Dendritic cell treated with granulocyte-macrophage colony-stimulating factor and Interleukin-4, amounts not matched to agents 40 ng/mL and 50 ng/mL, for 4 days (primary cell): ENCODE measurements at regions of chr7 and their contacts with region 1.

Region 1: GRCh38 chr7:149125863-149126661 is at the start of gene ZNF425:
- H3K4me3 Mint-ChIP-seq: peak within 1 kb of the TSS; percentile 99
- H3K27ac Mint-ChIP-seq: peak within 1 kb of the TSS; percentile 93
- H3K4me1 Mint-ChIP-seq: peaks cover 32% of the 10 kb centered on the region
- H3K27me3 Mint-ChIP-seq: peaks cover 4% of the 10 kb centered on the region

Region 2: DNA sequence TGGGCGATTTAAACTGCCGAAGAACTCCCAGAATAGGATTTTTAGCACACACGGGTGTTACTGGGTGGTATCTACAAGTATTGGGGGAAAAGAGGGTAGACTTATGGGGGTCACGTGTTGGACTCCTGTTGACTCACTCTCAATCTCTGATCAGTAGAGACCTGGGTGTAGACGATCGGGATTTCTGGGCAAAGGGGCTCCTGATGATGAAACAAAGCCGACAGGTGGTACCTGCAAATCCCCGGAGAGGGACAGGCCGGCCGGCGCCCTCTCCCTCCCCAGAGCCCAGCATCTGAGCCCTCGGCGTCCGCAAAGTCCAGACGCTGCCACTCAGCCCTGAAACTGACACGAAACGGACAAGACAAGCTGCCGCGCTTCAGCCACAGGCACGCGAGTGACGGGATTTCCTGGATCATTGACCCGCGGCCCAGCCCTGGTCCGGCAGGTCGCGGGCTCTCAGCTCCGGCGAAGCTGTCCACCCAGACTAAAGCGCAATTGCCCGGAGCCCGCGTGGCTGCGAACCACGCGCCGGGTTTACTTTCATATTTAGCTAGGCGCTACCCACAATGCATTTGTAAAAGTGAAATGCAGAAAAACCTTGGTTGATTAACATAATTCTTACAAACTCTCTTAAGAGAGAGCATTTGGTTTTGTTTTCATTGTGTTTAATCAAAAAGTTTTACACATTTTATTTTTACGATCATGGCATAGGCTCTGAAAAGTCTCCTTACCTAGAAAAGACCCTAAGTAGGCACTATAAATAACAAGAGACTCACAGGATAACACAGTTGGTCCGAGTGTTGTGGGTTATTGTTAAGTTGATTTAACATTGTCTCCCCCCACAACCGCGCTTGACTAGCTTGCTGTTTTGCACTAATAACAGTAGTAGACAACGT is 185.1 kb before region 1 on chr7:
- intact Hi-C with region 1: loop called (anchors 2 kb)
- H3K4me3 Mint-ChIP-seq: peak overlapping the region; percentile 85
- H3K27ac Mint-ChIP-seq: peak overlapping the region; percentile 97
- H3K4me1 Mint-ChIP-seq: peaks cover 11% of the 10 kb centered on the region
- H3K27me3 Mint-ChIP-seq: no peaks in the 10 kb centered on the region

Region 3: GRCh38 chr7:149028346-149029109 is 97.5 kb before region 1 on chr7 and contains the start of gene PDIA4:
- intact Hi-C with region 1: loop called (anchors 2 kb)
- H3K4me3 Mint-ChIP-seq: peak within 1 kb of the TSS; percentile 96
- H3K27ac Mint-ChIP-seq: peak within 1 kb of the TSS; percentile 97
- H3K4me1 Mint-ChIP-seq: peaks cover 35% of the 10 kb centered on the region
- H3K27me3 Mint-ChIP-seq: peaks cover 5% of the 10 kb centered on the region

Region 4: GRCh38 chr7:149147072-149147751 is 21.1 kb after region 1 on chr7 and contains the start of gene ZNF398:
- intact Hi-C with region 1: loop called (anchors 1 kb)
- H3K4me3 Mint-ChIP-seq: peak within 1 kb of the TSS; percentile 85
- H3K27ac Mint-ChIP-seq: peak within 1 kb of the TSS; percentile 90
- H3K4me1 Mint-ChIP-seq: peaks cover 30% of the 10 kb centered on the region
- H3K27me3 Mint-ChIP-seq: no peaks in the 10 kb centered on the region